ENCODE measurements at regions of chr2 and their contacts with region 1.

Region 1: DNA sequence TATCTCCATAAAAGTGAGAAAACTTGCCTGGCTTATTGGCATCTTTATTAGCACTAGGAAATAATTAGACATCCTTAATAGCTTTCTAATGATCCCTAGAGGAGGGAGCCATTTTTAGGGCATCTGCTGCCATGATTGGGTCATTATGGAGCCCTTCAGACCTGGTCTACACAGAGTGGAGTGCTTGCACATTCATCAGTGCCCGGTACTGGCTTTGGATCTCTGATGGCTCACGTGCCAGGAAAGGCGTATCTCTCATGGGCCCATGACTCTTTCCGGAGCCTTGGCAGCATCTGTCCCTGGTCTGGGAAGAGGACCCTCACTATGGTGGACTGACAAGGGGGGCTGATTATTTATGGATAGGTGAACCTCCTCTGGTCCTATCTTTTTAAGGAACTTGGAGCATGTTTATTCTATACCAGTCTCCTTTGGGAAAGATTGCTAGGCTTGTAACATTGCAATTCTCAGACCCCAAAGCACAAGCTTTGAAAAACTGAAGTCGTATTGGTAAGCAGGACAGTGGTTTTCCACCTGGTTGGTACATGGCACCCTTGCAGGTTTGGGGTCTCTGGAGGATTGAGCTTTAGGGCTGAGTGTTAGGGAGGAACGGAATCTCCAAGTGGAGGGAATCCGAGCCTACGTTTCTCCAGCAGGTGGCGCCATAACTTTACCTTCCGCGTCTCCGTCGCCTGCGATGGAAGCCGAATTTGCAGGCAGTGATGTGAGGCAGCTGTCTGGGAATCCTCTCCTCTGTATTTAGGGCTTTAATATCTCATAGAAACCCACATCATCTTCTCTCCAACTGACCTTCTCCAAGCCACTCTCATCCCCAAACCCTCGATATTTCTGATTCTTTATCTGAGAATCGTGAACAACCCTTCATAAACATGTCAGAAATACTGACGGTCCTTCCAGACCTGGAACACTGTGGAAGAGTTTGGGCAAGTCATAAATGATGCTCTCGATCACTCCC is 27.8 kb downstream of the SIX2 start:
- DNase-seq: peak; percentile 69
- H3K4me3 Mint-ChIP-seq: no peak overlapping the region
- H3K27ac Mint-ChIP-seq: no peak overlapping the region
- H3K4me1 Mint-ChIP-seq: no peaks in the 10 kb centered on the region
- H3K27me3 Mint-ChIP-seq: peaks cover 19% of the 10 kb centered on the region

Region 2: GRCh38 chr2:44997963-44998362 is 16.5 kb after region 1 on chr2:
- CTCF ChIA-PET with region 1: interaction called, 10 read pairs
- POLR2A ChIA-PET with region 1: no interaction called
- DNase-seq: no peak
- H3K4me3 Mint-ChIP-seq: no peak overlapping the region
- H3K27ac Mint-ChIP-seq: no peak overlapping the region
- H3K4me1 Mint-ChIP-seq: peaks cover 7% of the 10 kb centered on the region
- H3K27me3 Mint-ChIP-seq: peaks cover 87% of the 10 kb centered on the region

Region 3: GRCh38 chr2:45494269-45494977 is 513.0 kb after region 1 on chr2:
- CTCF ChIA-PET with region 1: interaction called, 40 read pairs
- POLR2A ChIA-PET with region 1: interaction called, 3 read pairs
- DNase-seq: no peak
- H3K4me3 Mint-ChIP-seq: no peak overlapping the region
- H3K27ac Mint-ChIP-seq: no peak overlapping the region
- H3K4me1 Mint-ChIP-seq: peaks cover 32% of the 10 kb centered on the region
- H3K27me3 Mint-ChIP-seq: no peaks in the 10 kb centered on the region

Region 4: GRCh38 chr2:45578056-45578809 is 596.8 kb after region 1 on chr2:
- CTCF ChIA-PET with region 1: interaction called, 31 read pairs
- POLR2A ChIA-PET with region 1: no interaction called
- DNase-seq: no peak
- H3K4me3 Mint-ChIP-seq: no peak overlapping the region
- H3K27ac Mint-ChIP-seq: no peak overlapping the region
- H3K4me1 Mint-ChIP-seq: peaks cover 6% of the 10 kb centered on the region
- H3K27me3 Mint-ChIP-seq: no peaks in the 10 kb centered on the region

Measured in activated CD4-positive, alpha-beta memory T cell treated with anti-CD3 and anti-CD28 coated beads, Interleukin-2, amount 10 ng/mL, durations not matched to agents 7 days and 5 days (primary cell).